ENCODE measurements at regions of chr20 and their contacts with region 1.

Region 1: DNA sequence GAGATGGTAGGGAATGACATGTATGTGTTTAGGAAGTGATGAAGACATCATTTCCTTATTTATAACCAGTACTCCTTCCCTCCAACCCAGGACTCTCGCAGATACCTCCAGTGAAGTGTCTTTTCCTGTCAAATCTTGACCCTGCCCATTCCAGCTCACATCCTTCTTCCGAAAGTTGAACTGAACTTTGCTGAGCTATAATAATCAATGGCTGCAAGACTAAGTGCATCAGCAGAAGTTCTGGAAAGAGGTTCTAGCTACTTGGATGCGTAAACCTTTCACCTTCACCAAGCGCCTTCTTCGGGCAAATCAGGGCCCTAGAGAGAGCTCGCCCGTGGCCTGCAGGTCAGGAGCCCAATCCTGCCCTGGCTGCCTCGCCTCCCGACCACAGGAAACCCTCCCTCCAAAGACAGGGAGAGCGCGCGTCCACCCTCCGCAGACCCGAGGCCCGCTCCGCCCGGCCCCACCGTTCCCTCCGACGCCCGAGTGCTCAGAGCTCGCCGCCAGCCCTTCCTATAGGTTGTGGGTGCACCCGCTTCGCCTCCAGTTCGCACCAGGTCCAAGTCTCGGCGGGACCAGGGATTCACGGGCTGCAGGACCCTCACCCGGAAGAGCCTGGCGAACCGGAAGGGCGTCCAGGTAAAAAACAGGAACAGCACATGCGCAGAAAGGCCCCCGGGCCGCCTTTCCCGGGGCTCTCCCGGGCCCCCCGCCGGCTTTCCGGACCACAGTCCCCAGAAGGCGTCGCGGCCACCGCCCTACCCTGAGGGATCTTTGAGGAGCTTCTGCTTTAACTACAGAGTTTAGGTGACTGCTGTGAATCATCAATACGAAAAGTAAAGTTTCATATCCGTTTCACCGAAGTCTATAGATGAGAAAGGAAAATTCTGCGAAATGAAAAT is at the start of gene ZNF334:
- DNase-seq: peak; percentile 76
- H3K4me3 ChIP-seq: peak within 1 kb of the TSS; percentile 56 to 67 (median 66)
- H3K27ac ChIP-seq: peak within 1 kb of the TSS; percentile 38 to 68 (median 55)
- H3K4me1 ChIP-seq: peaks cover 0 to 6% (median 5%) of the 10 kb centered on the region in 4 donors
- H3K27me3 ChIP-seq: peaks cover 0 to 11% (median 3%) of the 10 kb centered on the region in 3 donors
- CTCF ChIP-seq: no peak
- EP300 ChIP-seq: no peak
- POLR2A ChIP-seq: no peak
- total RNA-seq, gene ZNF334: 2.6 to 6.6 (median 4.4) TPM

Region 2: GRCh38 chr20:46363800-46364634 is 149.2 kb before region 1 on chr20:
- intact Hi-C with region 1: loop called (anchors 10 kb)
- DNase-seq: peak; percentile 94
- H3K4me3 ChIP-seq: peak overlapping the region; percentile 81 to 97 (median 93)
- H3K27ac ChIP-seq: peak overlapping the region; percentile 95 to 97 (median 96)
- H3K4me1 ChIP-seq: peaks cover 0 to 45% (median 36%) of the 10 kb centered on the region in 4 donors
- H3K27me3 ChIP-seq: no peaks in the 10 kb centered on the region
- CTCF ChIP-seq: no peak
- EP300 ChIP-seq: no peak
- POLR2A ChIP-seq: peak; percentile 83 to 85

Region 3: DNA sequence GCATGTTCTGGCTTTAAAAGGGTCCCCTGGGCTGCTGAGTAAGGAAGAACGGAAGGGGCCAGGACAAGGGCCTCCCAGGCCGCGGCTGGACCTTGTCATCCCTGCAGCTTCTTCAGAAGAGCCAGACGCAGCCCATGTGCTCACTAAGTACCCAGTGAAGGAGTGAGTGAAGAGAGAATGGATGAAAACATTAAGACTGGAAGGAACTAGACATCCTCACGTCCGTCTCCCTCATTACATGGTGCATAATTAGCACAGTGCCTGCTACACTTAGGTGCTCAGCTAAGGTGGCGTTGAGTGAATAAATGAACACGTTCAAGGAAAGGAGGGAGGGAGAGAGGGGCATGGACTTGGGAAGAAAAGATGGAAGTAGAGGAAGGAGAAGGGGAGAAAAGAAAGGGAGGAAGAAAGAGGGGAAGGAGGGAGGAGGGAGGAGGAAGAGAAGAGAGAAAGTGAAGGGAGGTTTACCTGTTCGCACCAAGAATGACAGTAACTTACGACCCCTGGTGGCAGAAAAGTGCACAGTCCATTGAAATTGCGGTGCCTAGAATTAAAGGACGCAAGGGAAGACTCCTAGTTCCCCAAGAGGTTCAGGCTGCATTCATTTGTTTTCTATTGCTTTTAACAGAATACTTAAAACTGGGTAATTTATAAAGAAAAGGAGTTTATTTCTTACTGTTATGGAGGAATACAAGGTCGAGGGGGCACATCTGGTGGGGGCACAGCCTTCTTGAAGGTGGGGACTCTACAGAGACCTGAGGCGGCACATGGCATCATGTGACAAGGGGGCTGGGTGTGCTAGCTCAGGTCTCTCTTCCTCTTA is 168.0 kb after region 1 on chr20:
- intact Hi-C with region 1: loop called (anchors 5 kb)
- DNase-seq: no peak
- H3K4me3 ChIP-seq: no peak overlapping the region
- H3K27ac ChIP-seq: no peak overlapping the region
- H3K4me1 ChIP-seq: peaks cover 0 to 34% (median 22%) of the 10 kb centered on the region in 4 donors
- H3K27me3 ChIP-seq: no peaks in the 10 kb centered on the region
- CTCF ChIP-seq: peak; percentile 48 to 79 (median 68)
- EP300 ChIP-seq: no peak
- POLR2A ChIP-seq: no peak

Measured in sigmoid colon (tissue), 7 donors.